KBM-7 (cell line): ENCODE measurements at regions of chr1 and their contacts with region 1.

Region 1: DNA sequence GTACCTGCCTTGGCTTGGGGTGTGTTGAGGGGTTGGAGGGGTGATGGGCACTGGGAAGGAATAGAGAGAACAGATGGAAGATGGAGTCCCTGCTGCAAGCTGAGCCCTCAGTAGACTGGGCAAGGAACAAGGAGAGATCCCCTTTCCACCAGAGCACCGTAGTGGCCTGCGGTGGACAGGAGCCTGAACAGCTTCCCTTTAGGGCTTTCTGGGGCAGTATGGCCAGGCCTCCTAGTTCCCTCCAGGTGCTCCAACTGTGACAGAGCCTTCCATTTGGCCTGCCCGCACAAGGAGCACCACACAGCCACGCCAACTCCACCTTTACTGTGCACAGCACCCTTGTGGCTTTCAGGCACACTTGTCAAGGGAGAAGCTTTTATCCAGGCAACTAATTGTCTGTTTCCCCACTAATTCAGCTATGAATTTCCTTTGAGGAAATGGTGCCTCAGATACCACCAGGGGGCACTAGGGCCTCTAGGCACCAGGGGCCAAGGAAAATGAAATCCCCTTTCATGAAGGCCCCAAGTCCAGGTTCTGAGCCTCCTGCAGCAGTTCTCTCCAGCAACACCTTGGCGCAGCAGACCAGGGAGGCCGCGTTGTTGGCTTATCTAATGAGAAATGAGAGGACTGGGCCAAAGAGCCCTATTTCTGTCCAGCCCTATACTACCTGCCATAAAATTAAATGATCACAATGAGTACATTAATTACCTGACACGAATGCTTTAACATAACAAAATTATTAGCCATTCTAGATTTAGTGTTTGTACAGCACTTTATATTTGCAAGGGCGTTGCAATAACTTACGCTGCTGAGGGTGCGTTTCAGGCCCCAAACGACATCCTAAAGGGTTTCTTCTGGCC is 23.1 kb upstream of the ERI3 start:
- DNase-seq: peak; percentile 73

Region 2: GRCh38 chr1:43914576-43915505 is 463.3 kb before region 1 on chr1:
- in situ Hi-C with region 1: no loop called
- DNase-seq: no peak

Region 3: DNA sequence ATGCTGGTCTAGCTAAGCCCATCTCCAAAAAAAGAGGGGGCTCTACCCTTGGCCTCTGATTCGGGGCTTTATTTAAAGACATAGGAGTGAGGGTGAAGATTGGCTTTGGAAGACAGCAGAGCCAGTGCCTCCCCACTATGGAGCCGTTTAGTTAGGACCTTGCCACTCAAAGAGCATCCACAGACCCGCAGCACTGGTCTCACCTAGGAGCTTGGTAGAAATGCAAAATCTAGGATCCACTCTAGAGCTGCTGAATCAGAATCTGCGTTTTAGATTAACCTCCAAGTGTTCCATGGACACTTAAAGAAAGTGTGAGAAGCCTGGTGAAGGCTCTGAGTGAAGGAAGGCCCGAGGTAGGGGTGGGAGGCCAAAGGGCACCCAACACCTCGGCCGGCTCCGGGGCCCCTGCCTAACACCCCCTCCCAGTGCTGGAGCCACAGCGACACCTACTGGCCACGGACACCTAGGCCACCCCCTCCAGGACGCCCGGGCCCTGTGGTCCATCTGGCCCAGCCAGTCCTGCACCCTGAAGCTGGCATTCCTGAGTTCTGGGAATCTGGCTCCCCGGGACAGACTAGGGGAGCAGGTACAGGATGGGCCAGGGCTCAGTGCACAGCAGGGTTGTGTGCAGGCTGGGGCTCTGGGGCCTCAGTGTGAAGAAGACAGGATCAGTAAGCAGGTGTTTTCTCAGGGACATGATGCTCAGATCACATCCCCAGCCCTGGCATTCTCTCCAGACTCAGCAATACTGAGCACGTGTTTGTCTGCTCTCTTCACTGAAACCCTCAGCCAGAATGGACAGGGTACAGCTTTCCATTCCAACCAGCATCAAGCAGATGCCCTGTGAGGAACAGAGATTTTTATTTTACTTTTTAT is 217.0 kb after region 1 on chr1:
- in situ Hi-C with region 1: loop called (anchors 25 kb)
- DNase-seq: peak; percentile 67